Naive thymus-derived CD4-positive, alpha-beta T cell (primary cell): ENCODE measurements at regions of chr7 and their contacts with region 1.

Region 1: GRCh38 chr7:138865843-138866242 is 67.8 kb upstream of the ATP6V0A4 start:
- DNase-seq: peak in 8 of 9 donors; percentile 21 to 62 (median 49)
- ATAC-seq: peak; percentile 84
- H3K4me3 ChIP-seq: no peak overlapping the region
- H3K4me3 Mint-ChIP-seq: no peak overlapping the region
- H3K27ac ChIP-seq: no peak overlapping the region
- H3K27ac Mint-ChIP-seq: peak overlapping the region in 7 of 9 donors; percentile 0 to 69 (median 40)
- H3K4me1 ChIP-seq: no peaks in the 10 kb centered on the region
- H3K4me1 Mint-ChIP-seq: peaks cover 0 to 18% (median 7%) of the 10 kb centered on the region in 7 donors
- H3K27me3 ChIP-seq: no peaks in the 10 kb centered on the region
- H3K27me3 Mint-ChIP-seq: peaks cover 0 to 4% (median 2%) of the 10 kb centered on the region in 5 donors

Region 2: GRCh38 chr7:138008547-138009349 is 857.1 kb before region 1 on chr7:
- CTCF ChIA-PET with region 1: no interaction called
- POLR2A ChIA-PET with region 1: no interaction called
- intact Hi-C with region 1: loop called (anchors 1 to 2 kb)
- DNase-seq: peak in 7 of 9 donors; percentile 20 to 63 (median 52)
- ATAC-seq: peak; percentile 80
- H3K4me3 ChIP-seq: no peak overlapping the region
- H3K4me3 Mint-ChIP-seq: no peak overlapping the region
- H3K27ac ChIP-seq: no peak overlapping the region
- H3K27ac Mint-ChIP-seq: peak overlapping the region in 1 of 9 donors; percentile 20
- H3K4me1 ChIP-seq: peaks cover 0 to 3% of the 10 kb centered on the region in 2 donors
- H3K4me1 Mint-ChIP-seq: peaks cover 3 to 13% (median 10%) of the 10 kb centered on the region in 7 donors
- H3K27me3 ChIP-seq: no peaks in the 10 kb centered on the region
- H3K27me3 Mint-ChIP-seq: peaks cover 0 to 6% (median 0%) of the 10 kb centered on the region in 5 donors

Region 3: DNA sequence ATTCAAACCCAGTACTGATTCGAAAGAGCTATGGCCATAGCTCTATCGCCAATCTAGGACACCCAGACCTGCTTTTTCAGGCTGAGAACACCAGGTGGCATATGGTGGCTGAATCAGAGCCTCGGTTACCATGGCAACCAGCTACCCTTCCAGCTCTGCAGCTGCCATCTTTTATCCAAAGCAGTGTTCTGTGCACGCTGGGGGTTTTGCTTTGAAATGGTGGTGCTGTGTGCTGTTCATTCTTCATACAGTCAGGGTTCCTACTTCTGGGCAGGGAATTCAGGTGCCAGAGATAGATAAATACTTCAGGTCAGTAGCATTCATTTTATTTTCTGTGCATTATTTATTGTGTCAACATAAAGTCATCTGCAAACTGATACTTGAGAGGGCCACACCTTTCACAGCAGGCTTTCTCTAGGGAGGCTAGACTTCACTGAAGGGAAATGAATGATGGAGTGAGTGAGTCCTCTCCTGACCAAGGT is 704.2 kb before region 1 on chr7:
- CTCF ChIA-PET with region 1: interaction called, 6 read pairs
- POLR2A ChIA-PET with region 1: no interaction called
- intact Hi-C with region 1: loop called (anchors 1 kb)
- DNase-seq: peak; percentile 24 to 87 (median 79)
- ATAC-seq: peak; percentile 99
- H3K4me3 ChIP-seq: no peak overlapping the region
- H3K4me3 Mint-ChIP-seq: no peak overlapping the region
- H3K27ac ChIP-seq: no peak overlapping the region
- H3K27ac Mint-ChIP-seq: no peak overlapping the region
- H3K4me1 ChIP-seq: no peaks in the 10 kb centered on the region
- H3K4me1 Mint-ChIP-seq: no peaks in the 10 kb centered on the region
- H3K27me3 ChIP-seq: no peaks in the 10 kb centered on the region
- H3K27me3 Mint-ChIP-seq: peaks cover 0 to 7% (median 0%) of the 10 kb centered on the region in 5 donors

Region 4: GRCh38 chr7:138449580-138449979 is 416.3 kb before region 1 on chr7:
- CTCF ChIA-PET with region 1: no interaction called
- POLR2A ChIA-PET with region 1: no interaction called
- intact Hi-C with region 1: loop called in 1 of 2 experiments (anchors 1 kb)
- DNase-seq: peak in 7 of 9 donors; percentile 8 to 37 (median 18)
- ATAC-seq: no peak
- H3K4me3 ChIP-seq: no peak overlapping the region
- H3K4me3 Mint-ChIP-seq: no peak overlapping the region
- H3K27ac ChIP-seq: no peak overlapping the region
- H3K27ac Mint-ChIP-seq: no peak overlapping the region
- H3K4me1 ChIP-seq: no peaks in the 10 kb centered on the region
- H3K4me1 Mint-ChIP-seq: no peaks in the 10 kb centered on the region
- H3K27me3 ChIP-seq: no peaks in the 10 kb centered on the region
- H3K27me3 Mint-ChIP-seq: peaks cover 0 to 3% (median 0%) of the 10 kb centered on the region in 5 donors

Region 5: DNA sequence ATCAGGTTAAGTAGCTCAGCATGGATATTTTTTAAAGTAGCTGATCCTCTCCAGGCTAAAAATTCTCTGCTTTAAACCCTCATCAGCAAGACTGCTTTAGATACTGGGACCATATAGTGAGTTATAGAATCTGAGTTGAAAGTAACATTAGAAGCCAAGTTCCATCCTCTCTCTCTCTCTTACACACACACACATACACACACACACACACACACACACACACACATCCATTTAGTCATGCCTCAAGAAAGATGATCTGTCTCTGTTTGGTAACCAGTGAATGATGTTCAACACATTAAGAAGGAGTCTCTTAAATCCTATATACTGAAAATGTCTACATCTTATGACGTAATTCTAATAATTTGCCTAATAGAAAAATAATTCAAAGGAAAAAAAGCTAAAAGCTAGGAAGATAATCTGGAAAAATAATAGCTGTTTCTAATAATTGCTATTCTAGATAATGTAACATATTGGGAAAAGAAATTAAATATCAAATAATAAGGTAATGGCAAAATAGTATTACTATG is 51.0 kb before region 1 on chr7:
- CTCF ChIA-PET with region 1: no interaction called
- POLR2A ChIA-PET with region 1: no interaction called
- intact Hi-C with region 1: loop called in 1 of 2 experiments (anchors 5 kb)
- DNase-seq: no peak
- ATAC-seq: no peak
- H3K4me3 ChIP-seq: no peak overlapping the region
- H3K4me3 Mint-ChIP-seq: peak overlapping the region in 1 of 10 donors; percentile 19
- H3K27ac ChIP-seq: no peak overlapping the region
- H3K27ac Mint-ChIP-seq: peak overlapping the region in 1 of 9 donors; percentile 2
- H3K4me1 ChIP-seq: no peaks in the 10 kb centered on the region
- H3K4me1 Mint-ChIP-seq: peaks cover 0 to 35% (median 0%) of the 10 kb centered on the region in 7 donors
- H3K27me3 ChIP-seq: no peaks in the 10 kb centered on the region
- H3K27me3 Mint-ChIP-seq: peaks cover 0 to 2% (median 0%) of the 10 kb centered on the region in 5 donors